ENCODE measurements at regions of chr18 and their contacts with region 1.

Region 1: GRCh38 chr18:70082430-70082829 is 123.1 kb downstream of the RTTN start:
- DNase-seq: no peak
- ATAC-seq: no peak
- H3K4me3 ChIP-seq: no peak overlapping the region
- H3K4me3 Mint-ChIP-seq: no peak overlapping the region
- H3K27ac ChIP-seq: no peak overlapping the region
- H3K27ac Mint-ChIP-seq: no peak overlapping the region
- H3K4me1 ChIP-seq: no peaks in the 10 kb centered on the region
- H3K4me1 Mint-ChIP-seq: no peaks in the 10 kb centered on the region
- H3K27me3 ChIP-seq: no peaks in the 10 kb centered on the region
- H3K27me3 Mint-ChIP-seq: no peaks in the 10 kb centered on the region

Region 2: DNA sequence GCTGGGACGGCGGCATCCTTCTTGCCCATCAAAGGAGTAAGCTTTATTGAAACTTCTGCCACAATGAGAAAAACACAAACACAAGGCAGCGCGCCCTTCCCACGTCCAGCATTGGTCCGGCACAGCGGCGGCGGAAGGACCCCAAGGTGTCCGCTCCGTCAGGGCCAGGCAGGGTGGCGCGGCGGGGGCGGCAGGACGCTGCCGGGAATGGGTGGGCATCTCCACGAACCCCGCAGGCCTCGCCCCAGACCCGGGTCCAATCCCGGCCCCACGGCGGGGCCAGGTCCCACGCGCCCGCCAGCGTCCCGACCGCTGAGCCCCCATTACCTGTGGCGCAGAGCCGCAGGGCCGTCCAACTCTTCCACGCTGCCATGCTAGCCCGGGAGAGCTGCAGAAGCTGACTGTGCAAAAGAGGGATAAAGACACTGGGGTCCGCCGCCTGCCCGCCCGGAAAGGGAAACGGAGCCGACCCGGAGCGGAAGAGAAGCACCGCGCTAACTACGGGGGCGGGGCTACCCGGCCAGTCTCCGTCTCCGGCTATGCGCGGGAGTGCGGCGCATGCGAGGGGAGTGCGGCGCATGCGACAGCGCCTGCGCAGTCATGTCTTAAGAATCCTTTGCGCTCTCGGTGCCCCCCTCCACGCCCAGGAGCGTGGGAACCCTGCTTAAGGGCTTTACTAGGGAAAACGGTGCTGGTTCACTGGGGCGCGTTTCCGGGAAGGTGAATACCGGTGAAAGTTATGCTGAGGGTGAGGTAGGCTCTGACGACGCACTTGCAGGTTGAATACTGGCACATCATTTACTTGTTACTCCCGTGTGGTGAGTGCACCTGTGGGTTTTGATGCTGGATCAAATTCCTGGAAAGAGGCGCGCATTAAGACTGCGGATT is 1367.6 kb before region 1 on chr18 and contains the start of gene TMX3:
- CTCF ChIA-PET with region 1: no interaction called
- POLR2A ChIA-PET with region 1: no interaction called
- intact Hi-C with region 1: loop called in 1 of 2 experiments (anchors 5 kb)
- DNase-seq: peak; percentile 86 to 93 (median 90)
- ATAC-seq: peak; percentile 99
- H3K4me3 ChIP-seq: peak within 1 kb of the TSS; percentile 86
- H3K4me3 Mint-ChIP-seq: peak within 1 kb of the TSS; percentile 93 to 100 (median 96)
- H3K27ac ChIP-seq: peak within 1 kb of the TSS; percentile 74
- H3K27ac Mint-ChIP-seq: peak within 1 kb of the TSS; percentile 88 to 98 (median 95)
- H3K4me1 ChIP-seq: peaks cover 4 to 17% of the 10 kb centered on the region in 2 donors
- H3K4me1 Mint-ChIP-seq: peaks cover 21 to 61% (median 53%) of the 10 kb centered on the region in 7 donors
- H3K27me3 ChIP-seq: no peaks in the 10 kb centered on the region
- H3K27me3 Mint-ChIP-seq: no peaks in the 10 kb centered on the region
- total RNA-seq, gene TMX3: 42.0 to 76.5 (median 63.2) TPM

Region 3: GRCh38 chr18:68925268-68925667 is 1157.2 kb before region 1 on chr18:
- CTCF ChIA-PET with region 1: no interaction called
- POLR2A ChIA-PET with region 1: no interaction called
- intact Hi-C with region 1: loop called in 1 of 2 experiments (anchors 10 kb)
- DNase-seq: no peak
- ATAC-seq: no peak
- H3K4me3 ChIP-seq: no peak overlapping the region
- H3K4me3 Mint-ChIP-seq: no peak overlapping the region
- H3K27ac ChIP-seq: no peak overlapping the region
- H3K27ac Mint-ChIP-seq: no peak overlapping the region
- H3K4me1 ChIP-seq: no peaks in the 10 kb centered on the region
- H3K4me1 Mint-ChIP-seq: no peaks in the 10 kb centered on the region
- H3K27me3 ChIP-seq: no peaks in the 10 kb centered on the region
- H3K27me3 Mint-ChIP-seq: no peaks in the 10 kb centered on the region

Region 4: DNA sequence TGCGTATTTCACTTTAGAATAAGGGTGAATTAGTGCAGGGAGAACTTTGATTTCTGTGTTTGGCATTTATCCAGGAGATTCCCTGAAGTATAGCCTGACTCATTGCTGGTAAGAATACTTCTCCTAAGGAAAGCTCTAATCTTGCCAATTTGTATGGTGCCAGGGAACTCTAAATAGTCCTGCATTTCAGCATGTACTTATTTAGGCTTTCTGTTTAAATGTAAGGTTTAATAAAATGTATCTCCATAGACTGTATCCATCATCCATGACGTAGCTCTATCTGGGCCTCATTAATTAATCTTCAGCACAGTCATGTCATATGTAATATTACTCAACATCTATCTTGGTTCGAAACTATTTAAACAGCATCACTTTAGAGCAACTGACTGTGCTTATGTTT is 554.0 kb before region 1 on chr18:
- CTCF ChIA-PET with region 1: no interaction called
- POLR2A ChIA-PET with region 1: no interaction called
- intact Hi-C with region 1: loop called in 1 of 2 experiments (anchors 10 kb)
- DNase-seq: no peak
- ATAC-seq: no peak
- H3K4me3 ChIP-seq: no peak overlapping the region
- H3K4me3 Mint-ChIP-seq: no peak overlapping the region
- H3K27ac ChIP-seq: no peak overlapping the region
- H3K27ac Mint-ChIP-seq: no peak overlapping the region
- H3K4me1 ChIP-seq: no peaks in the 10 kb centered on the region
- H3K4me1 Mint-ChIP-seq: no peaks in the 10 kb centered on the region
- H3K27me3 ChIP-seq: peaks cover 0 to 4% of the 10 kb centered on the region in 2 donors
- H3K27me3 Mint-ChIP-seq: peaks cover 0 to 5% (median 0%) of the 10 kb centered on the region in 5 donors

Region 5: GRCh38 chr18:69747388-69747787 is 335.0 kb before region 1 on chr18:
- CTCF ChIA-PET with region 1: no interaction called
- POLR2A ChIA-PET with region 1: no interaction called
- intact Hi-C with region 1: no loop called
- DNase-seq: no peak
- ATAC-seq: no peak
- H3K4me3 ChIP-seq: no peak overlapping the region
- H3K4me3 Mint-ChIP-seq: no peak overlapping the region
- H3K27ac ChIP-seq: no peak overlapping the region
- H3K27ac Mint-ChIP-seq: no peak overlapping the region
- H3K4me1 ChIP-seq: no peaks in the 10 kb centered on the region
- H3K4me1 Mint-ChIP-seq: no peaks in the 10 kb centered on the region
- H3K27me3 ChIP-seq: no peaks in the 10 kb centered on the region
- H3K27me3 Mint-ChIP-seq: no peaks in the 10 kb centered on the region

Region 6: DNA sequence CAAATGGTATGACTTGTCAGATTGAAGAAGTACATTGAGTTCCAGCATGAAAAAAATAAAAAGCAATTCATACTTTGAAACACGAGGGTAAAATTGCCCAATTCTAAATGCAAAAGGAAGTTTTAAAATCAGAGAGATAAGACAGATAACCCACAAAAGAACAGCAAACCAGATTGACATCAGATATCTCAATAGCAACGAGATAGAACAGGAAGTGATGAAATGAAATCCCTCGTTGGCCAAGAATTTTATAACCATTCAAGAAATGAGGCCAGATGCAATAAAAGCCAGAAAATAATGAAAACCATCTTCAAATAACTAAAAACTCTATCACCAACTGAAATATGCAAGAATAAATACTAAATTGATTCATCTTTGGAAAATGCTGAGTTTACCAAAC is 307.6 kb before region 1 on chr18:
- CTCF ChIA-PET with region 1: no interaction called
- POLR2A ChIA-PET with region 1: no interaction called
- intact Hi-C with region 1: no loop called
- DNase-seq: no peak
- ATAC-seq: no peak
- H3K4me3 ChIP-seq: no peak overlapping the region
- H3K4me3 Mint-ChIP-seq: peak overlapping the region in 1 of 10 donors; percentile 5
- H3K27ac ChIP-seq: no peak overlapping the region
- H3K27ac Mint-ChIP-seq: no peak overlapping the region
- H3K4me1 ChIP-seq: no peaks in the 10 kb centered on the region
- H3K4me1 Mint-ChIP-seq: peaks cover 7 to 19% (median 12%) of the 10 kb centered on the region in 7 donors
- H3K27me3 ChIP-seq: no peaks in the 10 kb centered on the region
- H3K27me3 Mint-ChIP-seq: no peaks in the 10 kb centered on the region

Region 7: DNA sequence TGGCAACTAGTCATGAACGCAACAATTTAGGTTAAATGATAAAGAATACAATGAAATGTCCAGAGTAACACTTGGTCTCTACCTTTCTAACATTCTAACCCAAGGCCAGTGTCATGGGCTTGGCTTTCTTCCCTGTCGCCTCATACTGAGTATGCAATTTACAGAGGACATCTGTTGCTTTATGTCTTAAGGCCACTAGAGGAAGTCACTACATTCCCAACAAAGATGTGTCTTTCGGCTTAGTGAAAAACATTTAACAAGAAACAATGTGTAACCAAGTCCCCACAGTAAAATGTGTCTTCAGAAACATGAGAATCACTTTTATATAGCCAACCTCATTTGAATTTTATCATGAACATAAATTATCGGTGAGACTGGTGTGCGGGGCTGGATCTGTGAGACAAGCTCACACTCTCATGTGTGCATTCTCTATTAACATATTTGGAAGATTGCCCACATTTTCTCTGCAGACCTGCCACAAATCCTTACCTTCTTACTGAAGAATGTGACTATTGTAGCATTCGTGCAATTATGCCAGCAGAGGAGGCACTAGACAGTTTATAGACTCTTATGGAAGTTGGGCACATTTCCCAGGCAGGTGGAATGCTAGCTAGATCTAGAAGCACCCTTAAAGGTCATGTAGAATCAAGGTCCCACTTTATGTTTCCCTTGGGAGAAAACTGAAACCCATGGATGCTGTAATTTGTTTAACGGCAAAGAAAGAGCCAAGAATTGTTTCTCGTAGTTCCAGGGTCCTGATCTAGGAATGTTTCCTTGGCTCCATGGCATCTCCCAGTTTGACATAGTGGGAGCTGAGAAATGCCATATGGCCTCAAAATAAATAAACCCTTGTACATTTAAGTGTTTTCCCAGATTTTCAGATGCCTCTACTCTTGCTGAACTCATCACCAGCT is 236.6 kb before region 1 on chr18:
- CTCF ChIA-PET with region 1: interaction called, 3 read pairs
- POLR2A ChIA-PET with region 1: no interaction called
- intact Hi-C with region 1: loop called in 1 of 2 experiments (anchors 5 kb)
- DNase-seq: peak in 2 of 9 donors; percentile 5 to 12
- ATAC-seq: no peak
- H3K4me3 ChIP-seq: no peak overlapping the region
- H3K4me3 Mint-ChIP-seq: no peak overlapping the region
- H3K27ac ChIP-seq: no peak overlapping the region
- H3K27ac Mint-ChIP-seq: peak overlapping the region in 1 of 9 donors; percentile 4
- H3K4me1 ChIP-seq: no peaks in the 10 kb centered on the region
- H3K4me1 Mint-ChIP-seq: peaks cover 0 to 3% (median 0%) of the 10 kb centered on the region in 7 donors
- H3K27me3 ChIP-seq: no peaks in the 10 kb centered on the region
- H3K27me3 Mint-ChIP-seq: no peaks in the 10 kb centered on the region

Measured in naive thymus-derived CD4-positive, alpha-beta T cell (primary cell).